Breast epithelium (tissue), 4 donors: ENCODE measurements at regions of chr11 and their contacts with region 1.

Region 1: GRCh38 chr11:71269603-71270511 is 17.5 kb upstream of the SHANK2 start:
- DNase-seq: peak in 1 of 2 donors; percentile 19
- H3K4me3 ChIP-seq: no peak overlapping the region
- H3K27ac ChIP-seq: no peak overlapping the region
- H3K4me1 ChIP-seq: no peaks in the 10 kb centered on the region
- H3K27me3 ChIP-seq: no peaks in the 10 kb centered on the region
- CTCF ChIP-seq: no peak
- POLR2A ChIP-seq: no peak

Region 2: DNA sequence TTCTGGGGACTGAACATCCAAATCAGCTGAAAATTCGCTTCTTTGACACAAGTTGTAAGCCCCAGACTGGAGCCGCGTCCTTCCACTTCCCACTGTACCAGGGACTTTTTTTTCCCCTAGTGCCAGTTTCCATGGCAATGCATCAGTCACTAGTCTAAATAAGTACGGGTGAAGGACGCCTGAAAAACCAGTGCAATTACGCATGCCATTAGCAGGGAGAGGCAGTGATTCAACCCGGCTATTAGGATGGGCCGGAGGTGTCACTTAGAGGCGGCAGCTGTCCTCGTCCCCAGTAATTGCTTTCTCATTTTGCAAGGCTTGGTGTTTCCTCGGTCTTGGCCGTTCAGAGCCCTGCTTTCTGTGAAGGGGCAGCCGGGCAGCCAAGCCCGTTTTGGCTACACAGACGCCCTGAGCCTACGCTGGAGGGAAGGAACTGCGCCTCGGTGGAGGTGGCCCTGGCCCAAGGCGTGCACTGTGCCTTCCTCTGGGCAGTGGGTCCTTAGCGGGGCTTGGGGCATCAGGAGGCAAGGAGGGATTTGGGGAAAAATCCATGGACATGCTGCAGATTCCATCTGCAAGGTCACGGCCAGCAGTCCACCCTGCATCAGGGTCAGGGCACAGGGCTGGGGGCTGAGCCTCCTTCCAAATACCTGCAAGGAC is 551.8 kb before region 1 on chr11:
- intact Hi-C with region 1: no loop called
- DNase-seq: no peak
- H3K4me3 ChIP-seq: no peak overlapping the region
- H3K27ac ChIP-seq: no peak overlapping the region
- H3K4me1 ChIP-seq: no peaks in the 10 kb centered on the region
- H3K27me3 ChIP-seq: peaks cover 0 to 10% of the 10 kb centered on the region in 2 donors
- CTCF ChIP-seq: no peak
- POLR2A ChIP-seq: no peak

Region 3: DNA sequence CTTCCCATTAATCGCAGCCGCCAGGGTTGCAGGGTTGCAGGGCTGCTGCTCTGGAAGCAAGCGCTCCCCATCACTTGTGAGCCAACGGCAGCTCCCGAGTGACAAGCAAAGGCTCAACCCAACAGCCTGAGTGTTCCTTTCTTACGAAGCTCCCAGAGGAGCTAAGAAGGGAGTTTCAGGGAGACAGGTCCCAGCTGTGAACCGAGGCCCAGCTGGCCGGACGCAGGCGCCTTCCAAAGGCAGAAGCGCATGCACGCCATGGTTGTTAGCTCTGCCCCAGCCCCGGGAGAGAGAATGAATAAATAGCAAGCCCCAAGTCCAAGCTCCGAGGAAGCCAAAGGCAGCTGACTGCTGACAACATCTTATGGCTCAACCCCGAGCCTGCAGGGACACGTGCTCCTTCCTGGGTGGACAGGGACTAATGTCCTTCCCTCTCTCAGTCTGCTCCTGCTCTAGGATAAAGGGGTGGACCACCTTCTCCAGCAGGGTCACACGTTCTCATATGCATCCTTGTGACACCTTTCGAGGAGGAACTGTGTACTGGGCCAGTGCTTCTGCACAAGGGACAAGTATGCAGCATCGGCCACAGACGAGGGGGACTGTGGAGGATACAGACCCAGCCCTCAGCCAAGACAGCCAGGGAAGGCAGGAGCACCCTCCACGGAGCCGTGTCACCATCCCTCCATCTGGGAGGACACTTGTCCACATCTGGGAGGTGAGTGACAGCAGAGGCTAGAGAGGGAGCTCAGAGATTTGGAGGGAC is 47.4 kb before region 1 on chr11:
- intact Hi-C with region 1: no loop called
- DNase-seq: no peak
- H3K4me3 ChIP-seq: no peak overlapping the region
- H3K27ac ChIP-seq: no peak overlapping the region
- H3K4me1 ChIP-seq: no peaks in the 10 kb centered on the region
- H3K27me3 ChIP-seq: no peaks in the 10 kb centered on the region
- CTCF ChIP-seq: no peak
- POLR2A ChIP-seq: no peak

Region 4: GRCh38 chr11:71235719-71236118 is 34.1 kb before region 1 on chr11:
- intact Hi-C with region 1: no loop called
- DNase-seq: no peak
- H3K4me3 ChIP-seq: no peak overlapping the region
- H3K27ac ChIP-seq: no peak overlapping the region
- H3K4me1 ChIP-seq: no peaks in the 10 kb centered on the region
- H3K27me3 ChIP-seq: no peaks in the 10 kb centered on the region
- CTCF ChIP-seq: no peak
- POLR2A ChIP-seq: no peak

Region 5: GRCh38 chr11:71251761-71252443 is 18.0 kb before region 1 on chr11:
- intact Hi-C with region 1: loop called (anchors 1 kb)
- DNase-seq: peak in 1 of 2 donors; percentile 52
- H3K4me3 ChIP-seq: peak overlapping the region; percentile 24 to 73 (median 63)
- H3K27ac ChIP-seq: peak overlapping the region; percentile 78 to 86
- H3K4me1 ChIP-seq: peaks cover 0 to 4% of the 10 kb centered on the region in 2 donors
- H3K27me3 ChIP-seq: peaks cover 0 to 25% of the 10 kb centered on the region in 2 donors
- CTCF ChIP-seq: peak in 1 of 3 donors; percentile 35
- POLR2A ChIP-seq: no peak